HEK293 (cell line): ENCODE measurements at regions of chr17 and their contacts with region 1.

Region 1: DNA sequence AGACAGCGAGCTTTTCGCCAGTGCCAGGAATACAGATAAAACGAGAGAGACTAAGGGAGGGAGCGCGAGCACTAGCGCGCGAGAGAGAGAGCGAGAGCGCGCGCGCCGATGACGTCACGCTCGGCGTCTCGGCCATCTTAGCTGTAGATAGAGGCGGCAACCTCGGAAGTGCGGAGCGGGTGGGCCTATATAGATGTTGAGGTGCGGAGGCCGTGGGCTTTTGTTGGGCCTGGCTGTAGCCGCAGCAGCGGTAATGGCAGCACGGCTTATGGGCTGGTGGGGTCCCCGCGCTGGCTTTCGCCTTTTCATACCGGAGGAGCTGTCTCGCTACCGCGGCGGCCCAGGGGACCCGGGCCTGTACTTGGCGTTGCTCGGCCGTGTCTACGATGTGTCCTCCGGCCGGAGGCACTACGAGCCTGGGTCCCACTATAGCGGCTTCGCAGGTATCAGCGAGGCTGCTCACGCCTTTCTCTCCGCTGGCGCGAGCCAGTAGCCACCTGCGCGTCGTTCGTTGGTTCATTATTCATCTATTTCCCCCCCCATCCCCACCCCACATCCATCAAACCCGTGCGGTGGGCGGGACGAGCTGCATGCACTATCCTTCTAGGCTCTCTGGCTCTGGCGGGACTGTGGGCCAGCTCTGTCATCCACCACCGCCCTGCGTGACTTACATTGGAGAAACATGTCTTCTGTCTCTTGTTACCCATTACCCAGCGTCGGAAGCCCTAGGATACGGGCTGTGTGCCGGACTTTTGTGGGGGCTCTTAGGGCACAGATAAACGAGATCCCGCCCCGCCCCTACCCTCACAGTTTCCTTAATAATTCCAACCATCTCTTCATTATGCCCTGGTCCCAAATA is 795 bp downstream of the CYB5D2 start:
- H3K4me3 ChIP-seq: peak overlapping the region; percentile 89
- H3K27ac ChIP-seq: peak overlapping the region; percentile 96
- H3K4me1 ChIP-seq: peaks cover 16% of the 10 kb centered on the region
- CTCF ChIP-seq: no peak

Region 2: DNA sequence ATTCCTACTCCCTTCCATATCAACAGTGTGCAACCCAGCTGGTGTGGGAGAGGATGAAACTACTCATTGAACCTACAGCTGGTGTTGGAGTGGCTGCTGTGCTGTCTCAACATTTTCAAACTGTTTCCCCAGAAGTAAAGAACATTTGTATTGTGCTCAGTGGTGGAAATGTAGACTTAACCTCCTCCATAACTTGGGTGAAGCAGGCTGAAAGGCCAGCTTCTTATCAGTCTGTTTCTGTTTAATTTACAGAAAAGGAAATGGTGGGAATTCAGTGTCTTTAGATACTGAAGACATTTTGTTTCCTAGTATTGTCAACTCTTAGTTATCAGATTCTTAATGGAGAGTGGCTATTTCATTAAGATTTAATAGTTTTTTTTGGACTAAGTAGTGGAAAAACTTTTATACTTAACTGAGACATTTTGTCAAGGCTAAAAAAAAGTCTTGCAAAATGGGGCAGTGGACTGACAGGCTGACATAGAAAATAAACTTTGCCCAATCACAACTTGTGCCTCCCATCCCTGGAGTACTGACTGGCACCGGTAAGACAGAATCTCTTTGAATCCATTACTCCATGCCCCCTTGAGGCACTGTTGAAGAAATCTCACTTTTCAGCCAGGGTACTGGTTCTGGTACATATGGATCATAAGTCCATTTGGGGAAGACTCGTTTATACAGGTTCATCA is 1820.0 kb before region 1 on chr17:
- CTCF ChIA-PET with region 1: no interaction called
- POLR2A ChIA-PET with region 1: interaction called, 10 read pairs
- H3K4me3 ChIP-seq: no peak overlapping the region
- H3K27ac ChIP-seq: no peak overlapping the region
- H3K4me1 ChIP-seq: no peaks in the 10 kb centered on the region
- CTCF ChIP-seq: no peak

Region 3: DNA sequence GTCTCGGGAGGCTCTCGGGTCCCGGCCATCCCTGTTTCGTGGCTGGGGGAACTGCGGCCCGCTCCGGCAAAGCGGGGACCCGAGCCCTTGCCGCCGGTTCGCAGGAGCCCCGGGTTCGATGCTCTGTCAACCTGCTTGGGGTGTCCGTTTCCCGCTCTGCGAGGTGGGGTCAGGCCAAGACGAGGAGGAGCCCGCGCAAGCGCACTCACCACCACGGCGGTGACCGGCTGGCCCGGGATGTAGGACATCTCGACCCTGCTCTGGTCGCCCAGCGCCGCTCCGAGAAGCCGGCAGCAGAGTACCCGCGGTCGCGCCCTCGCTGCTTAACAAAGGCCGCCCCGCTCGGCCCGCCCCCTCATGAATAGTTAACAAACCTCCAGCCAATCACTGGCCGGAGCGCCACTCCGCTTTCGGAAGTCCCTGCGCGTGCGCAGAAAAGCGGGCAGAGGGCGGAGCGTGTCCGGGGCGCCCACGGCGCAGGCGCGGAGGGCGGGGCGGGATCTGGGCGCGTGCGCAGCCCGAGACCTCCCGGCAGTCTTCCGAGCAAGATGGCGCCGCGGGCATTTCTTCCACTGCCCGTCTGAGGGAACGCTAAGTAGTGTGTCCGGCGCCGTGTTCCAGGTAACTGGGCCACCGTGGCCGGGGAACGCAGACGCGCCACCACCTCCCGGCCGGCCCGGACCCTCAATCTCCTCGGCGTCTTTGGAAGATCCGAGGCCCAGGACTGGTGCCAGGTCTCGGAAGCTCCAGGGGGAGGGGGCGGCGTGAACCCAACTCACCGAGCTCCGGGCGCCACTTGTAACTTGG is 475.3 kb before region 1 on chr17 and contains the starts of genes EMC6 and TAX1BP3:
- CTCF ChIA-PET with region 1: no interaction called
- POLR2A ChIA-PET with region 1: interaction called, 13 read pairs
- H3K4me3 ChIP-seq: peak within 1 kb of the TSS; percentile 90
- H3K27ac ChIP-seq: peak within 1 kb of the TSS; percentile 93
- H3K4me1 ChIP-seq: peaks cover 8% of the 10 kb centered on the region; the same call in 1 of the 2 replicates
- CTCF ChIP-seq: no peak

Region 4: GRCh38 chr17:4120332-4120731 is 23.5 kb before region 1 on chr17:
- CTCF ChIA-PET with region 1: no interaction called
- POLR2A ChIA-PET with region 1: interaction called, 10 read pairs
- H3K4me3 ChIP-seq: no peak overlapping the region
- H3K27ac ChIP-seq: no peak overlapping the region
- H3K4me1 ChIP-seq: no peaks in the 10 kb centered on the region
- CTCF ChIP-seq: no peak

Region 5: DNA sequence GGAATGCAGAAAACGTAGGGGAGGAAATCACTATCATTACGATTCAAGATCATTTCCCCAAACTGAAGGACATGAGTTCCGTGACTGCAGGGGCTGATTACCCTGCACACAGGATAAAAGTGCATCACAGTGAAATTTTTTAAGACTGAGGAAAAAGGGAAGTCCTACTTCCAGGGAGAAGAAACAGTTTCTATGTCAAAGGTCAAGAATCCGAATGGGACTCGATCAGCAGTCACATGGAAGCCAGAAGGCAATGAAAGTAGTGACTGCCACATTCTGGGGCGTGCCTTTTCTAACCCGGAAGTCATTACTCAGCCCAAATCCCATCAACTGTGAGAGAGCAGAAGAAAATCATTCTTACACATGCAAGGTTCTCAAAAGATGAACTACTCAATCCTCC is 13.1 kb before region 1 on chr17:
- CTCF ChIA-PET with region 1: interaction called, 3 read pairs
- POLR2A ChIA-PET with region 1: interaction called, 19 read pairs
- H3K4me3 ChIP-seq: no peak overlapping the region
- H3K27ac ChIP-seq: peak overlapping the region; percentile 24; the same call in 1 of the 2 replicates
- H3K4me1 ChIP-seq: peaks cover 9% of the 10 kb centered on the region
- CTCF ChIP-seq: no peak

Region 6: DNA sequence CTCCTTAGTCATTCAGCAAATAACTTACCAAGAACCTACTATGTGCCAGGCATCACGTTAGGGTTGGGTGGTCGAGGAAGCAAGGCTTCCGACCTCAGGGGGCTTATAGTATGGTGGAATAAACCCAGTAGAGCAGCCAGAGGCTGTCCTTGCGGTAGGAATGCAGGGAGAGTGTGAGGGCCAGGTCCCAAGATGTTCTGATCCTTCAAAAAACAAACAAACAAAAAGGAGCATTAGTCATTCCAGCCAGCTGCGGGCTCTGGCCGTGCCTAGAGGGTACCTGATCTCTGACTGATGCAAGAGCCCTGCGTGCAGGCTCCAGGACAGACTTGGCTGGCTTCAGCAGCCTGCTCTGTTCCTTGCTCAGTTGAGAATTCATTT is 17.4 kb after region 1 on chr17:
- CTCF ChIA-PET with region 1: interaction called, 4 read pairs
- POLR2A ChIA-PET with region 1: interaction called, 98 read pairs
- H3K4me3 ChIP-seq: no peak overlapping the region
- H3K27ac ChIP-seq: peak overlapping the region; percentile 51
- H3K4me1 ChIP-seq: peaks cover 16% of the 10 kb centered on the region
- CTCF ChIP-seq: peak; percentile 30; the same call in 1 of the 2 replicates

Region 7: DNA sequence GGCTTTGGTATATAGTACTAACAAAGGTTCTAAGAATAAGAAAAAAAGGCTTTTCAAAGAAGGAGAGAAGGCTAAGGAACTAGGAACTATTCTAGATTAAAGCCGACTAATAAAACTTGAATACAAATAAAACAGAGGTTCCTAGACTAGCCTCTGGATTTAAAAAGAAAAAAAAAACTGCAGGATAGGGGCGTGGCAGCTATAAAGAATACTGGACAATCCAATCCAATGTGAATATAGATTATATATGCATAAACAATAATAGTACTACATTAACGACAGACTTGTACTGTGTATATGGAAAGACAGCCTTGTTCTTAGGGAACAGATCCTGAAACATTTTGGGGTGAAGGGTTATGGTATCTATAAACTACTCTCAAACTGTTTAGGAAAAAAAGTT is 143.9 kb after region 1 on chr17:
- CTCF ChIA-PET with region 1: no interaction called
- POLR2A ChIA-PET with region 1: no interaction called
- H3K4me3 ChIP-seq: no peak overlapping the region
- H3K27ac ChIP-seq: no peak overlapping the region
- H3K4me1 ChIP-seq: no peaks in the 10 kb centered on the region
- CTCF ChIP-seq: no peak